Prostate gland (tissue), 2 donors: ENCODE measurements at regions of chr9 and their contacts with region 1.

Region 1: DNA sequence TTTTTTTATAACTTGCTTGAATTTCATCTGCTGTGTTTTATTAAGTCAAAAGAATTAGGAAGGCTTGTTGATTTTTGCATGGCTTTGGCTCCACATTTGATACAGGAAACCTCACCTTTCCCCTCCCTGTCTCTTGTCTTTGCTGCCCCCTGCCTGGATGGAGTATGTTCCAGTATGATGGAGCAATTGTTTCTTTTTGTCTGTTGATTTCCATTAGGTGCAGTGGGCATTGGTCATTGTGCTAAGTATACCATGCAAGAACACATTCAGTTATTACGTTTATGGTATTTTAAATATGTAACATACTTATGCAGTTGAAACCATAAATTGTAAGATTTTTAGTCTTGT is 19.6 kb downstream of the TJP2 start:
- DNase-seq: no peak
- H3K4me3 ChIP-seq: no peak overlapping the region
- H3K27ac ChIP-seq: no peak overlapping the region
- H3K4me1 ChIP-seq: peaks cover 2% of the 10 kb centered on the region
- H3K27me3 ChIP-seq: no peaks in the 10 kb centered on the region
- CTCF ChIP-seq: no peak
- POLR2A ChIP-seq: no peak

Region 2: DNA sequence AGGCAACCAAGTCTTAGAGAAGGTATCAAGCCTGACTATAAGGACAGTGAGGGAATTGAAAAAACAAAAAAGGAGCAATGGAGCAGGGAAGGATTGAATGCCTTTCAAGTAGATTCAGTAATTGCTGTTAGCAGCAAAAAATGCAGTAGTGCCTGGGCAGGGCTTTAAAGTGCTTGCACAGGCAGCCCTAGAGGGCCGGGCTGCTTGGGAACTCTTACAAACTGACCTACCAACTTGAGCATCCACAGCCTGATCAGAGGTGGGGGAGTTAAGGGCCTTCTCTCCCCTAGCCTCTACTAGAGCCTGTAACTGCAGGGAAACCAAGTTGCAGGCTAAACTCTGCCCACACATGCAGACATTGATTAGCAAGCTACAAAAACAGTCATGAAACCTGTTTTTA is 138.7 kb before region 1 on chr9:
- intact Hi-C with region 1: loop called (anchors 2 kb)
- DNase-seq: no peak
- H3K4me3 ChIP-seq: no peak overlapping the region
- H3K27ac ChIP-seq: no peak overlapping the region
- H3K4me1 ChIP-seq: no peaks in the 10 kb centered on the region
- H3K27me3 ChIP-seq: no peaks in the 10 kb centered on the region
- CTCF ChIP-seq: no peak
- POLR2A ChIP-seq: no peak

Region 3: DNA sequence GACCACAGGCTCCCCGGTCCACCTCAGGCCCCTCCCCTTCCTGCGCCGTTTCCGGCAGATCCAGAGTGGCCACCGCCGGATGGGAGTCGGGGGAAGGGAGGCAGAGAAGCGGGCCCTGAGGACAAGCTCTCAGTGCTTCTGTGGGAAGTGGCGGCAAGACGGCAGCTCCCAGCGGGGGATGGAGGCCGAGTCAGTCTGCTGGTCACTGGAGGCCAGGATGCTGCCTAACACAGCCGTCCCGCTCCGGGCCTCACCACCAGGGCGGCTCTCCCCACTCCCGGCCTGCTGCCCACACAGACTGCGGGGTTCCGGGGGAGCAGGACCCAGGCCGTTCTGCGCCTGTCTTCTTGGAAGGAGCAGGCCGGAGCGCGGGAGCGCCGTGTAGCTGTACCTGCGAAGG is 126.7 kb before region 1 on chr9:
- intact Hi-C with region 1: no loop called
- DNase-seq: no peak
- H3K4me3 ChIP-seq: no peak overlapping the region
- H3K27ac ChIP-seq: no peak overlapping the region
- H3K4me1 ChIP-seq: no peaks in the 10 kb centered on the region
- H3K27me3 ChIP-seq: no peaks in the 10 kb centered on the region
- CTCF ChIP-seq: no peak
- POLR2A ChIP-seq: no peak